H1 (cell line): ENCODE measurements at regions of chr5 and their contacts with region 1.

Region 1: GRCh38 chr5:171272996-171273970 is 35.8 kb upstream of the TLX3 start:
- DNase-seq: peak in 1 of 2 experiments; percentile 33
- H3K4me3 ChIP-seq: no peak overlapping the region
- H3K27ac ChIP-seq: no peak overlapping the region
- H3K4me1 ChIP-seq: peaks cover 0 to 3% (median 0%) of the 10 kb centered on the region in 4 experiments; a peak in 1 of 7 replicates
- H3K27me3 ChIP-seq: no peaks in the 10 kb centered on the region
- CTCF ChIP-seq: peak in 2 of 3 experiments; percentile 77 to 79; a peak in 3 of 4 replicates
- EP300 ChIP-seq: no peak
- POLR2A ChIP-seq: no peak
- RAD21 ChIP-seq: peak; percentile 86 to 87

Region 2: GRCh38 chr5:171336521-171337209 is 63.4 kb after region 1 on chr5:
- CTCF ChIA-PET with region 1: interaction called, 33 read pairs
- POLR2A ChIA-PET with region 1: no interaction called
- DNase-seq: peak in 1 of 2 experiments; percentile 58
- H3K4me3 ChIP-seq: peak overlapping the region in 2 of 4 experiments; percentile 10 to 41; a peak in 4 of 8 replicates
- H3K27ac ChIP-seq: no peak overlapping the region
- H3K4me1 ChIP-seq: peaks cover 0 to 6% (median under 1%) of the 10 kb centered on the region in 4 experiments; a peak in 1 of 7 replicates
- H3K27me3 ChIP-seq: peaks cover 1 to 27% (median 19%) of the 10 kb centered on the region in 4 experiments
- CTCF ChIP-seq: peak; percentile 56 to 77 (median 65)
- EP300 ChIP-seq: no peak
- POLR2A ChIP-seq: no peak
- RAD21 ChIP-seq: peak; percentile 78 to 86